Activated CD4-positive, alpha-beta T cell treated with anti-CD3 and anti-CD28 coated beads, Interleukin-2, amount 10 ng/mL, durations not matched to agents 24 days and 14 days (primary cell): ENCODE measurements at regions of chr22 and their contacts with region 1.

Region 1: DNA sequence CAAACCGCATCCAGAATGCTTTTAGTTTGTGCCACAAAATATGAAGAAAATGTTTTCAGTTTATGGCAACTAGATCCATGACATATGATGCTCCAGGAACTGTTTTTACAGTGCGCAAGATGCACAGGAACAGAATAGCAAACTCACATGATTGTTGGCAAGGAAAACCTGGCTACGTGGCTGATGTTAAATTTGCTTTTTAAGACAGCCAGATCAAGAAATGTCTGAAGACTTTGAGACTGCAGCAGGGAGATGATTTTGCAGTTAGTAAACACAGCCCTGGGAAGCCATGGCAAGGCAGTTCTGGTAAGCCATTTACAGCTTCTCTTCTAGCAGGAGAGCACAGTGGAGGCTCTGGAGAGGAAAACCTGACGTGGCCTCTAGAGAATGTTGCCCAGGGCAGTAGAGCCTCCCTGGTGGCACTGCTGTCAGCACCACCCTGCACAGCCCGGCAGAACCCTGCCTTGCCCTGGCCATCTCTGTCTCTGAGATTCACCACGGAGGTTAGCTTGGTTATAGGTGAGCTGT is 69.8 kb upstream of the TNRC6B start:
- DNase-seq: peak; percentile 79
- H3K4me3 Mint-ChIP-seq: peak overlapping the region; percentile 86
- H3K27ac Mint-ChIP-seq: peak overlapping the region; percentile 88
- H3K4me1 Mint-ChIP-seq: peaks cover 39% of the 10 kb centered on the region
- H3K27me3 Mint-ChIP-seq: no peaks in the 10 kb centered on the region

Region 2: DNA sequence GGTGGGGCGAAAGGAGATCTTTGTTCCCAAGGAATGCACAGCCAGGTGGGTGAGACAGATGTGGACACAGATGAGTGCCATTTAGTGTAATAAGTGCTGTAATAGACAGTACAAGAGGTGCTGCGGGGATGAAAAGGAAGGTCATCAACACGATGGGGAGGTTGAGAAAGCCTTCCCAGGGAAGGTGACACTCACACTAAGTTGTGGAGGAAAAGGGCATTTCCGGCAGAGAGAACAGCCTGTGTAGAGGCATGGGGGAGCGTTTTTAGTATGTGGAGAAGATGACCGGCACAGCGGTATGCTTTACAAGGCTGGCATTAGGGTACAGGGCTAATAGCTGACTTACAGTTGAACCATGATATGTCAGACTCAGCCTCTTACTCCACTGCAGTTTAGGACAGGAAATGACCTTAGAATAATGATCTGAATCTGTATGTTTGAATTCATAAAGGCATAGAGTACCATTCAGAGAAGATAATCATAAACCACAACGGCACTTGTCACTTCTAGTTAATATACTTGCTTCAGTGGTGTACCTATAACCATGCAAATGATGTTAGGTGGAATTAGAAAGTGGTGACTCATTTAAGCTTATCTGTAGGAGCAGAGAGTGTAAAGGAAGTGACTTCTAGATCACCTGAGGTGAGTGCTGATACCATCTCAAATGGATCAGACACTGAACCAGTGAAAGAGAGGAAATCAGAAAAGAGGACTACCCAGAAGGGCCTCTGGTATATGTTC is 52.6 kb before region 1 on chr22:
- intact Hi-C with region 1: loop called (anchors 5 kb)
- DNase-seq: peak; percentile 77
- H3K4me3 Mint-ChIP-seq: peak overlapping the region; percentile 71
- H3K27ac Mint-ChIP-seq: peak overlapping the region; percentile 95
- H3K4me1 Mint-ChIP-seq: peaks cover 57% of the 10 kb centered on the region
- H3K27me3 Mint-ChIP-seq: no peaks in the 10 kb centered on the region

Region 3: GRCh38 chr22:40094485-40094884 is 13.4 kb before region 1 on chr22:
- intact Hi-C with region 1: loop called (anchors 1 kb)
- DNase-seq: peak; percentile 69
- H3K4me3 Mint-ChIP-seq: peak overlapping the region; percentile 79
- H3K27ac Mint-ChIP-seq: peak overlapping the region; percentile 58
- H3K4me1 Mint-ChIP-seq: peaks cover 40% of the 10 kb centered on the region
- H3K27me3 Mint-ChIP-seq: no peaks in the 10 kb centered on the region

Region 4: DNA sequence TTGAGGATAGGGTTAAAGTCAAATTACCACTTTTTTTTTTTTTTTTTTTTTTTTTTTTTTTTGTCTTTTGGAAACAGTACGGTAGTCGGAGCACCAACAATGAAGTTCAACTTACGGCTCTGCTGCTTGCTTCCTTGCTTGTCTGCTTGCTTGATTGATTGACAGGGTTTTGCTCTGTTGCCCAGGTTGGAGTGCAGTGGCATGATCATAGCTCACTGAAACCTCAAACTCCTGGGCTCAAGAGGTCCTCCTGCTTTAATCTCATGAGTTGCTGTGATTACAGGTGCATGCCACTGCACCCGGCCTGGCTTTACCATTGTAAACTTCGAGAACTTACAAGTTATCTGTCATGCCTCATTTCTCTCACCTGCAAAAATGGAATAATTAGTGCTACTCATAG is 268.2 kb after region 1 on chr22:
- intact Hi-C with region 1: no loop called
- DNase-seq: no peak
- H3K4me3 Mint-ChIP-seq: no peak overlapping the region
- H3K27ac Mint-ChIP-seq: no peak overlapping the region
- H3K4me1 Mint-ChIP-seq: peaks cover 16% of the 10 kb centered on the region
- H3K27me3 Mint-ChIP-seq: no peaks in the 10 kb centered on the region